A673 (cell line): ENCODE measurements at regions of chr1 and their contacts with region 1.

Region 1: GRCh38 chr1:87863317-87863716 is 534.6 kb downstream of the LMO4 start:
- DNase-seq: peak; percentile 58
- H3K4me3 ChIP-seq: no peak overlapping the region
- H3K27ac ChIP-seq: no peak overlapping the region
- H3K4me1 ChIP-seq: peaks cover 6% of the 10 kb centered on the region
- H3K27me3 ChIP-seq: no peaks in the 10 kb centered on the region
- CTCF ChIP-seq: no peak

Region 2: DNA sequence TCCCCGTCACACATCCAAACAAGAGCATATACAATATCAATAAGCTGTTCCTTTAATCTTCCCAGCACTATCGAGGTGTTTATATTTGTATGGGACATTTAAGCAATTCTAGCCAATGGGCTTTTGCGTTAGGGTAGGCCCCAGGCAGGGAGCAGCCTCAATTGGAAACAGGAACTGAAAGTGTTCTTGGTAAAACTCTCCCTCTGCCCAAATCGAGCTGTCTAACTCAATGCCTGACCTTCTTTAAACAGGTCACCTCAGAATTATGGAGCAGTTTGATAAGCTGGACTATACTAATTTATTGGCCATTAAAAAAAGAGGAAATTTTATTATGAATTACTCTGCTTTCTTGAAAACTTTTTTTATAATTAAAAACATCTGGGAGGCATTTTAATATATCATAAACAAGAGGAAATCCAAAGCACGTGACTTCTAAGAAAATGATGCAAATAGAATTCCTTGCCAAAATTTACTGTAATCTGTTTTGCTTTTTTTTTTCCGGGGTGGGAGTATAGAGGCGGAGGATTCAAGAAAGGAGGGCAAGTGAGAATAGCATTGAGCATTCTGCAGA is 36.6 kb before region 1 on chr1:
- CTCF ChIA-PET with region 1: no interaction called
- POLR2A ChIA-PET with region 1: no interaction called
- intact Hi-C with region 1: loop called (anchors 1 kb)
- DNase-seq: peak; percentile 83
- H3K4me3 ChIP-seq: no peak overlapping the region
- H3K27ac ChIP-seq: peak overlapping the region; percentile 43
- H3K4me1 ChIP-seq: peaks cover 16% of the 10 kb centered on the region
- H3K27me3 ChIP-seq: no peaks in the 10 kb centered on the region
- CTCF ChIP-seq: no peak

Region 3: DNA sequence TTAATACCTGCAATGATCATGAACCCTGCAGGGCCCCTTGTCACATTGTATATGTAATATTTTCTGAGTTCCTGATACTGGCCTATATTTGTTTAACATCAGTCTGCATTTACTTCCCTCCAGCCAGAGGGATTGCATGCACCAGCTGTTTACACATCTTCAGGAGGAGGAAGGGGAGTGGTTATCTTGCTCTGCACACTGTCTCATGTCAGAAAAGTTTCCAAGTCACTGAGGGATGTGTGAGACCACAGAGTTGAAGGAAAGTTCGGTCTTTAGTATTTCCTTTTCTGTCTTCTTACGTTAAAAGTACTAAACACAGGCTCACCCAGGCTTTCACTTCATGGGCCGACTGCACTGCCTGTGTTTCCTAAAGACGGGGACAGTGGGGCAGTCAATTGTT is 39.5 kb after region 1 on chr1:
- CTCF ChIA-PET with region 1: no interaction called
- POLR2A ChIA-PET with region 1: no interaction called
- intact Hi-C with region 1: no loop called
- DNase-seq: no peak
- H3K4me3 ChIP-seq: no peak overlapping the region
- H3K27ac ChIP-seq: no peak overlapping the region
- H3K4me1 ChIP-seq: no peaks in the 10 kb centered on the region
- H3K27me3 ChIP-seq: no peaks in the 10 kb centered on the region
- CTCF ChIP-seq: no peak

Region 4: GRCh38 chr1:88088481-88088880 is 225.2 kb after region 1 on chr1:
- CTCF ChIA-PET with region 1: no interaction called
- POLR2A ChIA-PET with region 1: no interaction called
- intact Hi-C with region 1: no loop called
- DNase-seq: peak; percentile 9
- H3K4me3 ChIP-seq: no peak overlapping the region
- H3K27ac ChIP-seq: no peak overlapping the region
- H3K4me1 ChIP-seq: no peaks in the 10 kb centered on the region
- H3K27me3 ChIP-seq: no peaks in the 10 kb centered on the region
- CTCF ChIP-seq: no peak